Ovary (tissue), 10 donors: ENCODE measurements at regions of chr18 and their contacts with region 1.

Region 1: DNA sequence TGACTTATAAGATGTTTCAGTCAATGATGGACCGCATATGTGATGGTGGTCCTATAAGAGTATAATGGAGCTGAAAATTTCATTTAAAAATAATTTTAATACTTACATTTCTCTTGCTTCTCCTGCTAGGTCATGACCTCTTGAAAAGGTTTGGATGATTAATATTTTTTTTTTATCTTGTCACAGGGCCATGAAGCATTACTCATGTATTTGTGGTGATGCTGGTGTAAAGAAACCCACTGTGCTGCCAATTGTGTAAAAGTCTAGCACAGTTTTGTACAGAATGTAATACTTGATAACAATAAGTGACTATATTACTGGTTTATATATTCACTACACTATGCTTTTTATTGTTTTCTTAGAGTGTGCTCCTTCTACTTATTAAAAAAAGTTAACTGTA is 124.2 kb upstream of the CELF4 start:
- DNase-seq: no peak
- H3K4me3 ChIP-seq: no peak overlapping the region
- H3K27ac ChIP-seq: no peak overlapping the region
- H3K4me1 ChIP-seq: no peaks in the 10 kb centered on the region
- H3K27me3 ChIP-seq: no peaks in the 10 kb centered on the region
- CTCF ChIP-seq: no peak
- EP300 ChIP-seq: no peak
- POLR2A ChIP-seq: no peak

Region 2: GRCh38 chr18:37639846-37640245 is 50.0 kb before region 1 on chr18:
- intact Hi-C with region 1: loop called in 1 of 4 experiments (anchors 5 kb)
- DNase-seq: no peak
- H3K4me3 ChIP-seq: no peak overlapping the region
- H3K27ac ChIP-seq: no peak overlapping the region
- H3K4me1 ChIP-seq: no peaks in the 10 kb centered on the region
- H3K27me3 ChIP-seq: no peaks in the 10 kb centered on the region
- CTCF ChIP-seq: no peak
- EP300 ChIP-seq: no peak
- POLR2A ChIP-seq: no peak